Activated CD4-positive, alpha-beta T cell treated with anti-CD3 and anti-CD28 coated beads for 36 hours (primary cell): ENCODE measurements at regions of chr2 and their contacts with region 1.

Region 1: GRCh38 chr2:68467077-68467960 is at the starts of genes APLF and FBXO48:
- DNase-seq: peak; percentile 99
- ATAC-seq: peak; percentile 93
- H3K4me3 Mint-ChIP-seq: peak within 1 kb of the TSS; percentile 93
- H3K27ac Mint-ChIP-seq: peak within 1 kb of the TSS; percentile 93
- H3K4me1 Mint-ChIP-seq: peaks cover 45% of the 10 kb centered on the region
- H3K27me3 Mint-ChIP-seq: no peaks in the 10 kb centered on the region
- total RNA-seq, gene APLF: 2.5 to 4.3 TPM
- total RNA-seq, gene FBXO48: 2.0 to 2.4 TPM

Region 2: GRCh38 chr2:67965246-67965645 is 502.1 kb before region 1 on chr2:
- CTCF ChIA-PET with region 1: no interaction called
- POLR2A ChIA-PET with region 1: no interaction called
- intact Hi-C with region 1: no loop called
- DNase-seq: no peak
- ATAC-seq: no peak
- H3K4me3 Mint-ChIP-seq: no peak overlapping the region
- H3K27ac Mint-ChIP-seq: no peak overlapping the region
- H3K4me1 Mint-ChIP-seq: no peaks in the 10 kb centered on the region
- H3K27me3 Mint-ChIP-seq: peaks cover 4% of the 10 kb centered on the region

Region 3: DNA sequence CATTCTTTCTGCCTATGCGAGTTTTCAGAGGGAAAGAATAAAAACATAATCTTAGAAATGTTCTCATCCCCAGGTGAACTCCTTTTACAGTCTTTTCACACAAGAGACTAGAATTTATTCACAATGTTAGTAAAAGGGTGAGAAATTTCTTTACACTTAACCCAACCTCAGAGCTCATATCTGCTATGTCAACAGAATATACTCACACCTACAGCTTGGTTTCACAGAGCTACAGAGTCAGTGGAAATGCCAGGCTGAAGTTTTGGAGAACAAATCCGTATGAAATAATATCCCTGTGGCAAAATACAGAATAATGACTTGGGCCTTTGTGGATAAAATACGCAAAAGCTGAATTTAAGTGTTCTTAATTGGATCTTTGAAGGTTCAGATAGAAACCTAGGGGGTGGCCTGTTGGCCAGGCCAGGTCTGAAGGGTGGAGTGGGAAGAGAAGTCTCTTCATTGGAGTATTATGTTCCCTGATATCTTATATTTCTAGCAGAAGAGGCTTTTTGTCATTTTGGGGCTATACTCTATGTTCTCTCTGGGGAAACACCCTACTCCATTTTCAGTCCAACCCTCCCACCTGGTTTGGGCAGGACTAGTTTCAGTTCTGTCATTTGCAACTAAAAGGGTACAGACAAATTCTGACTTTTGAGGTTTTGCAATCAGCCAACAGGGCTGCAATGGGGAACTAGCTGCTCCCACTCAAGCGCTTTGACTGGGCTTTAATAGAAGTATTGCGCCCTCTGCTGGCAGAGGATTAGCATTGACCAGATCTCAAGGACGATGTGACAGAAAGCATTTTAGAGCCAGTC is 25.9 kb before region 1 on chr2:
- CTCF ChIA-PET with region 1: interaction called, 33 read pairs
- POLR2A ChIA-PET with region 1: no interaction called
- intact Hi-C with region 1: no loop called
- DNase-seq: peak; percentile 92
- ATAC-seq: peak; percentile 98
- H3K4me3 Mint-ChIP-seq: no peak overlapping the region
- H3K27ac Mint-ChIP-seq: no peak overlapping the region
- H3K4me1 Mint-ChIP-seq: peaks cover 14% of the 10 kb centered on the region
- H3K27me3 Mint-ChIP-seq: peaks cover 2% of the 10 kb centered on the region

Region 4: DNA sequence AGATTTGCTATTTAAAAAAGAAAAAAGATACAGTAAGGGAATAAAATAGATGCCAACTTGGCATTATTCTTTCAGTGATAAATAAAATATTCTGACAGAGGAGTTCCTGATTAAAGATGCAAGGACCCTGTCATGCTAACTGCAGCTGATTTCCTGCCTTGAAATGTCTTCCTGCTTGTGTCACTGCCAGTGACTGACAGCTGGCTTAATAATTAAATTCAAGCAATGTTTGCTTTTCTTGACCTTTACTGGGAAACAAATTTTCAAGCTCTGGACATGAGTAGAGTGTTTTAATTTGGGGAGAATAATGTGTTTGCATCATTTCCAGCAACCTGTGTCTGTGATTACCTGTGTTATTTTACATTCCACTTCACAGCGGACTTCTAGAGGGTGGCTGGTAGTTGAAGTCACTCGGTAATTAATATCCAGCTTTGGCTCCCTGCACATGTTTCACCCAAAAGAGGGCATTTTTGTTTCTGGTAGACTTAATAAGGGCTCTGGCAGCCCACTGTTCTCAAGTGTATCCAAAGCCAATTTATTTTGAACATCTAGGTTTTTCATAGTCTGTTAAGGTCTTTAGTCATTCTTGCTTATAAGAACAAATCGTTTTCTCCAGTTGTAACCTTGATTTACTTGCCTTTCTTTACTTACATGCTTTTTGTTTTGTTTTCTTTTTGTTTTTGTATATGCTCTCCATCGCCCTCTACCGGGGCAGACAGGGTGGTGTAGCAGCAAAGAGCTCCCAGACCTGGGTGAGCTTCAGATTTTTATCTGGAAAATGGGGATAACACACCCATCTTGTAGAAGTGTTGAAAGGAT is 127.6 kb after region 1 on chr2:
- CTCF ChIA-PET with region 1: interaction called, 47 read pairs
- POLR2A ChIA-PET with region 1: no interaction called
- intact Hi-C with region 1: loop called (anchors 1 kb)
- DNase-seq: peak; percentile 72
- ATAC-seq: peak; percentile 49
- H3K4me3 Mint-ChIP-seq: no peak overlapping the region
- H3K27ac Mint-ChIP-seq: no peak overlapping the region
- H3K4me1 Mint-ChIP-seq: peaks cover 6% of the 10 kb centered on the region
- H3K27me3 Mint-ChIP-seq: peaks cover 9% of the 10 kb centered on the region

Region 5: GRCh38 chr2:68734688-68735525 is 267.6 kb after region 1 on chr2 and contains the start of gene ARHGAP25:
- CTCF ChIA-PET with region 1: interaction called, 10 read pairs
- POLR2A ChIA-PET with region 1: no interaction called
- intact Hi-C with region 1: loop called (anchors 2 to 5 kb)
- DNase-seq: peak; percentile 84
- ATAC-seq: peak; percentile 75
- H3K4me3 Mint-ChIP-seq: no peak within 1 kb of the TSS
- H3K27ac Mint-ChIP-seq: no peak within 1 kb of the TSS
- H3K4me1 Mint-ChIP-seq: peaks cover 40% of the 10 kb centered on the region
- H3K27me3 Mint-ChIP-seq: no peaks in the 10 kb centered on the region
- total RNA-seq, gene ARHGAP25: 57.9 to 73.2 TPM

Region 6: DNA sequence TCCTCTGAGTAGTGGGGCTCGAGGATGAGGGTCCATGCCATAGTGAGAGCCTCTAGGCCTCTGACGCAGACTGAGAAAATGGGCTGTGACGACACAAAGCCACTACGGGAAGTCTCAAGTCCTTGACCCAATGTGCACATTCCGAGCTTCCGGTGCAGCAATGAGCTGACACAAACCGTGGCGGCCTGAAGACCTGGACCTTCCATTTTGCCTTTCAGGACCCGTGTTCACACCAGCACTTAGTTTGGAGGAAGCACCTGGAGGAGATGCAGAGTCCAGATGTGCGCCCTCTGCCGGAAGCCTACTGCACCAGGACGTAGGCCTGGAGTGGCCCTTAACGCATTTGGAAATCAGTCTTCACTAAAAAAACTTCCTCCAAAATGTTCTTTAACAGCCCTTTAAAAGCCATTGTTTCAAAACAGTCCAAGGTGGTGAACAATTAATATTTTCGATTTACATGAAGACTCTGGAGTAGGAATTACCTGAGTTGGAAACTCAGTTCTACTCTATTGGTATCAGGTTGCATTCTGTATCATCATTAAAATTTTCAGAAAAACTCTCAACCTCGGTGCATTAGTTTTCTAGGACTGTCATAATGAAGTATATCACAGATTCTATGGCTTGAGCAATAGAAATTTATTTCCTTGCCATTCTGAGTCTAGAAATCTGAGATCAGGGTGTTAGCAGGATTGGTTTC is 370.0 kb after region 1 on chr2:
- CTCF ChIA-PET with region 1: interaction called, 6 read pairs
- POLR2A ChIA-PET with region 1: no interaction called
- intact Hi-C with region 1: loop called (anchors 2 kb)
- DNase-seq: peak; percentile 84
- ATAC-seq: peak; percentile 45
- H3K4me3 Mint-ChIP-seq: no peak overlapping the region
- H3K27ac Mint-ChIP-seq: peak overlapping the region; percentile 79
- H3K4me1 Mint-ChIP-seq: peaks cover 39% of the 10 kb centered on the region
- H3K27me3 Mint-ChIP-seq: no peaks in the 10 kb centered on the region

Region 7: GRCh38 chr2:69306822-69307578 is 839.7 kb after region 1 on chr2:
- CTCF ChIA-PET with region 1: interaction called, 4 read pairs
- POLR2A ChIA-PET with region 1: no interaction called
- intact Hi-C with region 1: loop called in 1 of 2 experiments (anchors 2 kb)
- DNase-seq: peak; percentile 85
- ATAC-seq: peak; percentile 92
- H3K4me3 Mint-ChIP-seq: peak overlapping the region; percentile 64
- H3K27ac Mint-ChIP-seq: no peak overlapping the region
- H3K4me1 Mint-ChIP-seq: peaks cover 14% of the 10 kb centered on the region
- H3K27me3 Mint-ChIP-seq: peaks cover 15% of the 10 kb centered on the region

Region 8: GRCh38 chr2:70190418-70191243 is 1723.3 kb after region 1 on chr2 and contains the start of gene C2orf42:
- CTCF ChIA-PET with region 1: no interaction called
- POLR2A ChIA-PET with region 1: no interaction called
- intact Hi-C with region 1: loop called in 1 of 2 experiments (anchors 2 kb)
- DNase-seq: peak; percentile 98
- ATAC-seq: peak; percentile 91
- H3K4me3 Mint-ChIP-seq: peak within 1 kb of the TSS; percentile 84
- H3K27ac Mint-ChIP-seq: peak within 1 kb of the TSS; percentile 97
- H3K4me1 Mint-ChIP-seq: peaks cover 16% of the 10 kb centered on the region
- H3K27me3 Mint-ChIP-seq: no peaks in the 10 kb centered on the region
- total RNA-seq, gene C2orf42: 22.6 to 23.3 TPM